Endothelial cell of umbilical vein (primary cell): ENCODE measurements at regions of chr2 and their contacts with region 1.

Region 1: GRCh38 chr2:109510136-109511028 is 103.4 kb downstream of the SEPTIN10 start:
- DNase-seq: peak; percentile 66
- H3K4me3 ChIP-seq: no peak overlapping the region
- H3K27ac ChIP-seq: no peak overlapping the region
- H3K4me1 ChIP-seq: no peaks in the 10 kb centered on the region
- H3K27me3 ChIP-seq: no peaks in the 10 kb centered on the region
- CTCF ChIP-seq: peak; percentile 90 to 96
- POLR2A ChIP-seq: no peak

Region 2: GRCh38 chr2:108927936-108928659 is 582.3 kb before region 1 on chr2:
- CTCF ChIA-PET with region 1: interaction called, 35 read pairs
- POLR2A ChIA-PET with region 1: no interaction called
- dilution Hi-C with region 1: no loop called
- intact Hi-C with region 1: loop called (anchors 2 kb)
- DNase-seq: peak; percentile 51
- H3K4me3 ChIP-seq: no peak overlapping the region
- H3K27ac ChIP-seq: no peak overlapping the region
- H3K4me1 ChIP-seq: no peaks in the 10 kb centered on the region
- H3K27me3 ChIP-seq: no peaks in the 10 kb centered on the region
- CTCF ChIP-seq: peak; percentile 71 to 73
- POLR2A ChIP-seq: no peak

Region 3: DNA sequence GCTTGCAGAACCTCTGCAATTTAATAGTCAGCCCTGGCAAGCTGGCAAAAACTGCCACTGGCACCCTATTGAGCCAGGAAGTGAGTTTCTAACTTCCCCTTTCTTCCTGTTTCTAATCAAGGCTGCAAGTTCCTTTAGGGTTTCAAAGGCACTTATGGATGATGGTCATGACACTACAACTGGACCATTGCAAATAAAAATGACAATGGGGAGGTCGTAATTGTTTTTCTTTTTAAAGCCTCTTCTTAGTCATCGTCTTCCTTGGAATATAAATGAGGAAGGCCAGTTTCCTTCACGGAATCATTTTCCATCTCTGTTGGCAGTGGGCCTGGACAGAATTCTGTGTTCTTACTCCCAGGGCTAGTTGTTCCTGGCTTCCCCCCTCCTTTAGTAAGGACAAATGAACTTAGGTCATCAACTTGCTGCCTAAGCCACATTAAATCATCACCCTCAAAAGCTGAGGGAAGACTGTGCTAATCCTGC is 345.6 kb before region 1 on chr2:
- CTCF ChIA-PET with region 1: interaction called, 11 read pairs
- POLR2A ChIA-PET with region 1: no interaction called
- dilution Hi-C with region 1: no loop called
- intact Hi-C with region 1: no loop called
- DNase-seq: peak; percentile 95
- H3K4me3 ChIP-seq: no peak overlapping the region
- H3K27ac ChIP-seq: peak overlapping the region; percentile 37
- H3K4me1 ChIP-seq: peaks cover 50% of the 10 kb centered on the region
- H3K27me3 ChIP-seq: no peaks in the 10 kb centered on the region
- CTCF ChIP-seq: no peak
- POLR2A ChIP-seq: no peak

Region 4: GRCh38 chr2:109201465-109202327 is 308.7 kb before region 1 on chr2:
- CTCF ChIA-PET with region 1: no interaction called
- POLR2A ChIA-PET with region 1: no interaction called
- dilution Hi-C with region 1: no loop called
- intact Hi-C with region 1: no loop called
- DNase-seq: no peak
- H3K4me3 ChIP-seq: no peak overlapping the region
- H3K27ac ChIP-seq: no peak overlapping the region
- H3K4me1 ChIP-seq: no peaks in the 10 kb centered on the region
- H3K27me3 ChIP-seq: no peaks in the 10 kb centered on the region
- CTCF ChIP-seq: no peak
- POLR2A ChIP-seq: no peak

Region 5: GRCh38 chr2:109266998-109267854 is 243.2 kb before region 1 on chr2:
- CTCF ChIA-PET with region 1: interaction called, 15 read pairs
- POLR2A ChIA-PET with region 1: no interaction called
- dilution Hi-C with region 1: no loop called
- intact Hi-C with region 1: loop called (anchors 2 kb)
- DNase-seq: peak; percentile 87
- H3K4me3 ChIP-seq: no peak overlapping the region
- H3K27ac ChIP-seq: peak overlapping the region; percentile 95
- H3K4me1 ChIP-seq: peaks cover 39% of the 10 kb centered on the region
- H3K27me3 ChIP-seq: no peaks in the 10 kb centered on the region
- CTCF ChIP-seq: no peak
- POLR2A ChIP-seq: peak; percentile 45

Region 6: DNA sequence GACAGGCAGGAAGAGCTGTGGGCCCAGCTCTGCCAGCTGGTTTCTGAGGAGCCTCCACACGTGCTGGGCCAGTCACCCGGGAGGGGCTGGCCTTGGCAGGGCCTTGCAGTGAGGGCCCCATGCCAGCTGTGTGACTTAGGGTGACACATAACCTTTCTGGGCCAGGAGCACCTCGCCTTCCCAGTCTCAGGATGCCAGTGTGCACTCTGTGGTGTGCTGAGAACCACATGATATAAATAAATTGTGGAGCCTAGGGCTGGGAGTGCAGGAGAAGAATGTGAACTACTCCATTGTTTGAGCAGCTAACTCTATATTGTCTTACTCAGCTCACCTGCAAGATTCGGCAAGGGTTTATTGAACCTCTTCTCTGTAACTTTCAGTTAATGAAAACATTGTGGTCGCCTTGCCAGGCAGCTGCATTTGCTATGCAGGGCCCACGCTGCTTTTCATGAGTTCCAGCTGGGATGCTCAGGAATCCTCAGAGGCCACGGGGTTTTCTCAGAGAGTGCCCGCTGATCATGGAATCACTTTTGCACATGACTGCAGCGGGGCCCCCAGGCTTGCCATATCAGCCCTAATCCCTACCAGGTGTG is 159.1 kb before region 1 on chr2:
- CTCF ChIA-PET with region 1: interaction called, 12 read pairs
- POLR2A ChIA-PET with region 1: no interaction called
- dilution Hi-C with region 1: no loop called
- intact Hi-C with region 1: no loop called
- DNase-seq: peak; percentile 69
- H3K4me3 ChIP-seq: no peak overlapping the region
- H3K27ac ChIP-seq: no peak overlapping the region
- H3K4me1 ChIP-seq: peaks cover 38% of the 10 kb centered on the region
- H3K27me3 ChIP-seq: no peaks in the 10 kb centered on the region
- CTCF ChIP-seq: no peak
- POLR2A ChIP-seq: no peak

Region 7: GRCh38 chr2:109451671-109452070 is 58.7 kb before region 1 on chr2:
- CTCF ChIA-PET with region 1: interaction called, 10 read pairs
- POLR2A ChIA-PET with region 1: no interaction called
- dilution Hi-C with region 1: no loop called
- intact Hi-C with region 1: no loop called
- DNase-seq: no peak
- H3K4me3 ChIP-seq: no peak overlapping the region
- H3K27ac ChIP-seq: no peak overlapping the region
- H3K4me1 ChIP-seq: no peaks in the 10 kb centered on the region
- H3K27me3 ChIP-seq: no peaks in the 10 kb centered on the region
- CTCF ChIP-seq: no peak
- POLR2A ChIP-seq: no peak

Region 8: DNA sequence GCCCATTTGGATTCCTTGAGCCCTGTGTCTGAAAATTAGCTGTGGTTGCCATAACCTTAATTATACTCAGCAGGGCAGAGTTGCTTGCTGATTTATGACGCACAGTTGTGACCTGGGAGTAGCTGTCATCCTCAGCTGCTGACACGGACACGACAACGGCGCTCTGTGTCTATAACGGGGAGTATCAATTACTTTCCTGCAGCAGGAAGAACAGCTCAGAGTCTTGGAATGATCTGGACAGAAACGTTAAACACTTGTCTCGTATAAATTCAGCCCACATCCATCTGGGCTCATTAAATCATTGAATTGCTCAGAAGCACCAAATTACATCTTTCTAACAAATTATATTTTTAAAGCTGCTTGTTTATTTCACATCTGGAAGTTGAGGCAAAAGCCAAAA is 12.9 kb before region 1 on chr2:
- CTCF ChIA-PET with region 1: interaction called, 30 read pairs
- POLR2A ChIA-PET with region 1: no interaction called
- dilution Hi-C with region 1: no loop called
- intact Hi-C with region 1: no loop called
- DNase-seq: peak; percentile 60
- H3K4me3 ChIP-seq: no peak overlapping the region
- H3K27ac ChIP-seq: peak overlapping the region; percentile 74
- H3K4me1 ChIP-seq: peaks cover 19% of the 10 kb centered on the region
- H3K27me3 ChIP-seq: no peaks in the 10 kb centered on the region
- CTCF ChIP-seq: no peak
- POLR2A ChIP-seq: no peak